K562 (cell line): ENCODE measurements at regions of chr22 and their contacts with region 1.

Region 1: DNA sequence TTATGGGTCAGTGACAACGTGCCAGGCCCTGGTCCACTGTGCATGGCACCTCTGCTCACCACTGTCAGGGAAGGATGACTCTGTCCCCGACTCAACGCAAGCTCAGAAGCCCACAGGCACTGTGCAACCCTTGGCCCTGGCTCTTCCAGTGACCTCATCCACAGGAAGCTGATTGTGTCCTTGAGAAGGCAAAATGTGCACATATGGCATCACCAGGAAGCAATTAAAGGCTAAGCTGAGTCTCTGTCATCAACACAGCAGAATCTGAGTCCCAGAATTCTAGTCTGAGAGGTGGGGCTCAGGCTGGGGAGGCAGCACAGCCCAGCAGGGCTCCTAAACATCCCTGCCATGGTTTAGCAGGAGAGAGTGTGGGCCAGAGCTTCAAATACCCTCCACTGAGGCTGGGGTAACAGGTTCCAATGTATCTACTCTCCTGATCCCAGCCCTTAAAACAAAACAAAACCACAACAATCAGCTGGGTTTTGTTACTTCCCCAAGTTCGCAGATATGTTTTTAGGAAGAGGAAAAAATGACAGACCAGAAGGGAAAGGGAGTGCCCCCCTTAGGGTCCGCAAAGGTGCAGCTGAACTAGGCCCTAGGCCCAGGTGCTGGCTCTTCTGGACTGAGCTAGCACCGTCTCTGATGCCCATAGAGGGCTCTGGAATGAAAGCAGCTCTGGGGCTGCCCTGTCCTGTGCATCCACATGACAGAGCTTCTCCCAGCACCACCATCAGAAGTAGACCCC is 33.5 kb upstream of the GNAZ start:
- DNase-seq: peak in 3 of 4 experiments; percentile 52 to 55 (median 54)
- ATAC-seq: peak; percentile 18
- H3K4me3 ChIP-seq: no peak overlapping the region
- H3K27ac ChIP-seq: no peak overlapping the region
- H3K4me1 ChIP-seq: peaks cover 2 to 5% of the 10 kb centered on the region in 2 experiments; a peak in 1 of 5 replicates
- H3K27me3 ChIP-seq: peaks cover 18 to 54% of the 10 kb centered on the region in 2 experiments; a peak in 4 of 5 replicates
- CTCF ChIP-seq: no peak
- EP300 ChIP-seq: no peak
- POLR2A ChIP-seq: no peak
- RAD21 ChIP-seq: no peak

Region 2: GRCh38 chr22:23023294-23023693 is 13.6 kb before region 1 on chr22:
- CTCF ChIA-PET with region 1: no interaction called
- POLR2A ChIA-PET with region 1: interaction called, 83 read pairs
- in situ Hi-C with region 1: no loop called
- intact Hi-C with region 1: no loop called
- DNase-seq: no peak
- ATAC-seq: no peak
- H3K4me3 ChIP-seq: no peak overlapping the region
- H3K27ac ChIP-seq: no peak overlapping the region
- H3K4me1 ChIP-seq: peaks cover 0 to 4% of the 10 kb centered on the region in 2 experiments; a peak in 2 of 5 replicates
- H3K27me3 ChIP-seq: peaks cover 16 to 26% of the 10 kb centered on the region in 2 experiments
- CTCF ChIP-seq: no peak
- EP300 ChIP-seq: no peak
- POLR2A ChIP-seq: no peak
- RAD21 ChIP-seq: no peak

Region 3: GRCh38 chr22:23054531-23055257 is 17.8 kb after region 1 on chr22:
- CTCF ChIA-PET with region 1: no interaction called
- POLR2A ChIA-PET with region 1: interaction called, 16 read pairs
- in situ Hi-C with region 1: no loop called
- intact Hi-C with region 1: loop called (anchors 1 kb)
- DNase-seq: peak in 1 of 4 experiments; percentile 55
- ATAC-seq: no peak
- H3K4me3 ChIP-seq: no peak overlapping the region
- H3K27ac ChIP-seq: no peak overlapping the region
- H3K4me1 ChIP-seq: peaks cover 0 to 3% of the 10 kb centered on the region in 2 experiments; a peak in 1 of 5 replicates
- H3K27me3 ChIP-seq: peaks cover 9 to 36% of the 10 kb centered on the region in 2 experiments; a peak in 4 of 5 replicates
- CTCF ChIP-seq: no peak
- EP300 ChIP-seq: no peak
- POLR2A ChIP-seq: no peak
- RAD21 ChIP-seq: no peak

Region 4: GRCh38 chr22:23504516-23504915 is 467.7 kb after region 1 on chr22:
- CTCF ChIA-PET with region 1: no interaction called
- POLR2A ChIA-PET with region 1: no interaction called
- in situ Hi-C with region 1: no loop called
- intact Hi-C with region 1: no loop called
- DNase-seq: no peak
- ATAC-seq: no peak; the same call in 2 of the 3 replicates
- H3K4me3 ChIP-seq: no peak overlapping the region
- H3K27ac ChIP-seq: no peak overlapping the region
- H3K4me1 ChIP-seq: peaks cover 0 to 5% of the 10 kb centered on the region in 2 experiments; a peak in 3 of 5 replicates
- H3K27me3 ChIP-seq: peaks cover 0 to 4% of the 10 kb centered on the region in 2 experiments; a peak in 1 of 5 replicates
- CTCF ChIP-seq: no peak
- EP300 ChIP-seq: no peak
- POLR2A ChIP-seq: no peak
- RAD21 ChIP-seq: no peak